Activated T-helper 2 cell treated with anti-CD3 and anti-CD28 coated beads, Interferon-gamma antibody, Interleukin-2, Interleukin-4, amounts not matched to agents 10 μg/mL and 5 μg/mL and 100 μg/mL, durations not matched to agents 14 hours and 24 hours and 36 hours (primary cell): ENCODE measurements at regions of chr1 and their contacts with region 1.

Region 1: DNA sequence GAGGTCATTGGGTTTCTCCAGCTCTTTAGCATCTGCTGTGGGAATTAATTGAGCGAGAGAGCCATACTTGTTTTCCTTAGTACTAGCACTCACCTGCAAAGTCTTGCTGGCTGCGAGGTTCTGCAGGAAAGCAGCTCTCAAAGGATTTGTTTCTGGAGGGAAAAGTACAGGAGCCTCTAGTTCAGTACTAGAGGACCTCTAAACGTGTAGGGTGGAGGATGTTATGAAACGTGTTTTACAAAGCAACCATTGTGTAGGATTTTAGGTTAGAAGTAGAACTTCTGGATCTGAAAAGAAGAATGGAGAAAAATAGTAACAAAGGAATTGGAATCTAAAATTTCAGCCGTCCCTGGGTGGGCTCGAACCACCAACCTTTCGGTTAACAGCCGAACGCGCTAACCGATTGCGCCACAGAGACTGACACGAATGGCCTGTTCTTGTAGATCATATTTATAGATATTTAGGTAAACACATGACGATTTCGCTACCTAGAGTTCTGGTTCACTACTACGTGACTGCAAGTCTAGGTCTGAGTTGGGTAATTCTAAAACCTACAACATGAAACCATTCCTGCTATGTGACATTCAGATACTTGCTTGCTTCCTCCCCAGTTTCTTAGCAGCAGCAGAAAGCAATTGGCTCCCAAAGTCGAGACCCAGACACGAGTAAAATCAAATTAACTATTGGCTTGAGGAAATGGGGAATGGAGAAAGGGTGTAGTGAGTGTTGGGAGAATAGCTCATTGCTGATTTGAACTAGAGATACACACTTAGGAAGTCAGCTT is 60.2 kb upstream of the CFAP126 start:
- DNase-seq: peak; percentile 19
- H3K4me3 Mint-ChIP-seq: peak overlapping the region; percentile 14
- H3K27ac Mint-ChIP-seq: no peak overlapping the region
- H3K4me1 Mint-ChIP-seq: peaks cover 9% of the 10 kb centered on the region
- H3K27me3 Mint-ChIP-seq: peaks cover 48% of the 10 kb centered on the region

Region 2: GRCh38 chr1:161399257-161399998 is 28.5 kb before region 1 on chr1:
- intact Hi-C with region 1: loop called (anchors 2 kb)
- DNase-seq: peak; percentile 87
- H3K4me3 Mint-ChIP-seq: peak overlapping the region; percentile 98
- H3K27ac Mint-ChIP-seq: peak overlapping the region; percentile 99
- H3K4me1 Mint-ChIP-seq: peaks cover 29% of the 10 kb centered on the region
- H3K27me3 Mint-ChIP-seq: peaks cover 8% of the 10 kb centered on the region

Region 3: GRCh38 chr1:161499099-161500039 is 71.4 kb after region 1 on chr1:
- intact Hi-C with region 1: no loop called
- DNase-seq: no peak
- H3K4me3 Mint-ChIP-seq: no peak overlapping the region
- H3K27ac Mint-ChIP-seq: no peak overlapping the region
- H3K4me1 Mint-ChIP-seq: peaks cover 14% of the 10 kb centered on the region
- H3K27me3 Mint-ChIP-seq: peaks cover 44% of the 10 kb centered on the region